Heart right ventricle (tissue), 16 donors: ENCODE measurements at regions of chr12 and their contacts with region 1.

Region 1: DNA sequence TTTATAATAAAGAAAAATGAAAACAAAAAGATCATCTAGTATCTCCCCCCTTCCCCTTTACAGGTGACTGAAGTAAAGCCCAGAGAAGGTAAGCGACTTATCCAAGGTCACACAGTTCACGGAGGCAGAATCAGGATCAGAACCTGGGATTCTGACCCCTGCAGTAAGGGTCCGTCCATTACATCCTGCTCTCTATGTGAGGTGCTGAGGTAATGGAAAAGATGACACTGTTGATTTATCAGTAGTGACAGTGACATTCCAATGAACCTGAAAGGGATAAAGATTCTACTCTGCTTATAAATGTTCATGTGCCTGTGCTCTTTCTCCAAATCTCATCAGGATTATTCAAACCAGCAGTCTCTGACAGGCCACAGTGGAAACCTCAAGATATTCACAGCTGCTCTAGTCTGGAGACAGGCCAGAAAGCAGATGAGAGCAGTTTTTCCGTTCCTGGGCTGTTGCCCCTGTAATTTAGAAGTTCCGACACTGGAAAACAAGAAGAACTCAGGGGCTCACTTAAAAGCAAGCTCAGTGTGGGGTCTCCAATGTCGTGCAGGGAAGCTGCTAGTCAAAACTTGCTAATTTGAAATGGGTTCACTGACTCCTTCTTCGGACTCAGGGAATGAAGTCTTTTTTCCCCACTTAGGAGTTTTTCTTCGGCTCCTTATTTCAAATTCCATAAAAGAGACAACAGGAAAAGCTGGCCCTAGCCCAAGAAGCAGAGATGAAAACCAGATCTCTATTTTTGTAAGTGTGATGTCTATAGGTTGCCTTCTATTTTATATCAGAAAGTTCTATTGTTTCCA is 131.8 kb upstream of the EEA1 start:
- DNase-seq: peak in 1 of 2 donors; percentile 61
- ATAC-seq: peak; percentile 15 to 79 (median 74)
- H3K4me3 ChIP-seq: peak overlapping the region in 4 of 10 donors; percentile 4 to 13 (median 9)
- H3K27ac ChIP-seq: peak overlapping the region; percentile 61 to 88 (median 78)
- H3K4me1 ChIP-seq: peaks cover 14 to 36% (median 26%) of the 10 kb centered on the region in 9 donors
- H3K27me3 ChIP-seq: no peaks in the 10 kb centered on the region
- CTCF ChIP-seq: peak in 5 of 9 donors; percentile 12 to 33 (median 18)

Region 2: DNA sequence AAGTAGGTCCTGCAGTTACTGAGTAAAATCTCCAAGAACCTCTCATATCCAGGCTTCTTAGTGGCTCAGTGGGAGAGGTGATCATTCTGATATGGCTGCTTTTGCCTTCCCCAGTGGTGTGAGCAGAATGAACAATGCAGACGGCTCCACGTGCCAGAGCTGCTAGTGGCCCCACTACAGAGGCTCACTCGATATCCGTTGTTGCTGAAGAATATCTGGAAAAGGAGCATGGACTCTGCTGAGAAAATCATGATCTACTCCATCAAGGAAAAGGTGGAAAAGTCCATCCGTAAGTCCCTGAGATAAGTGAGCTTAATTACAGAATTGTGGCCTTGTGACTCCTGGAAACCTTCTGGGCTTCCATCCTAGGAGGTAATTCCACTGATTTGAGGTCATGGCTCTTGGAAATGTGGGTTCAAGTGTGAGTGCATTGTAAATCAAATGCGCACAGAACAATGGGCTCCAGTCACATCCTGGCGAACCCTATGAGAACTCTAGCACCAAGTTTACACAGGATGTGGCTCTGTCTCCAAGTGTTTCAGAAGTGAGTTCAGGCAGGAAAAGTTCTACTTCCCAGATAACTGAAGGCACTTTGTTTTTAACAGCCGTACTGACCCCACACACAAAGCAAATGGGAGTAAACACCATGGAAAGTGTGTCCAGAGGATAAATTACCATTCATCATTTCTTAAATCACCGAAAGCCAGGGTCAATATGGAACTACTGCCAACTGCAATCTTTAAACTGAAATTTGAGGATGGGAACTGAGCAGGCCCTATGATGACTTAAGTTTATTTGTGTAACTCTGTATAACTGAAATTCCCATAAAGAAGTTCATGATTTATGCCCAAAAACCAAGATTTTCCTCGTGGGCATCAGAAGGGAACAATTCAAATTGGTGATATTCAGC is 306.6 kb before region 1 on chr12:
- intact Hi-C with region 1: no loop called
- DNase-seq: peak in 1 of 2 donors; percentile 60
- ATAC-seq: peak; percentile 44 to 90 (median 83)
- H3K4me3 ChIP-seq: no peak overlapping the region
- H3K27ac ChIP-seq: peak overlapping the region in 8 of 10 donors; percentile 32 to 76 (median 59)
- H3K4me1 ChIP-seq: peaks cover 0 to 30% (median 10%) of the 10 kb centered on the region in 9 donors
- H3K27me3 ChIP-seq: no peaks in the 10 kb centered on the region
- CTCF ChIP-seq: no peak

Region 3: GRCh38 chr12:93100610-93101009 is 39.7 kb after region 1 on chr12:
- intact Hi-C with region 1: loop called in 3 of 10 experiments (anchors 5 kb)
- DNase-seq: no peak
- ATAC-seq: no peak
- H3K4me3 ChIP-seq: no peak overlapping the region
- H3K27ac ChIP-seq: no peak overlapping the region
- H3K4me1 ChIP-seq: peaks cover 0 to 11% (median 3%) of the 10 kb centered on the region in 9 donors
- H3K27me3 ChIP-seq: no peaks in the 10 kb centered on the region
- CTCF ChIP-seq: no peak

Region 4: GRCh38 chr12:93109551-93110203 is 48.8 kb after region 1 on chr12:
- intact Hi-C with region 1: loop called in 4 of 10 experiments (anchors 5 kb)
- DNase-seq: no peak
- ATAC-seq: peak in 4 of 8 donors; percentile 8 to 54 (median 16)
- H3K4me3 ChIP-seq: no peak overlapping the region
- H3K27ac ChIP-seq: peak overlapping the region in 4 of 10 donors; percentile 8 to 55 (median 36)
- H3K4me1 ChIP-seq: peaks cover 0 to 52% (median 31%) of the 10 kb centered on the region in 9 donors
- H3K27me3 ChIP-seq: no peaks in the 10 kb centered on the region
- CTCF ChIP-seq: no peak